Activated T-helper 2 cell treated with anti-CD3 and anti-CD28 coated beads, Interferon-gamma antibody, Interleukin-2, Interleukin-4, amounts not matched to agents 10 μg/mL and 5 μg/mL and 100 μg/mL, durations not matched to agents 14 hours and 24 hours and 36 hours (primary cell): ENCODE measurements at regions of chr4 and their contacts with region 1.

Region 1: DNA sequence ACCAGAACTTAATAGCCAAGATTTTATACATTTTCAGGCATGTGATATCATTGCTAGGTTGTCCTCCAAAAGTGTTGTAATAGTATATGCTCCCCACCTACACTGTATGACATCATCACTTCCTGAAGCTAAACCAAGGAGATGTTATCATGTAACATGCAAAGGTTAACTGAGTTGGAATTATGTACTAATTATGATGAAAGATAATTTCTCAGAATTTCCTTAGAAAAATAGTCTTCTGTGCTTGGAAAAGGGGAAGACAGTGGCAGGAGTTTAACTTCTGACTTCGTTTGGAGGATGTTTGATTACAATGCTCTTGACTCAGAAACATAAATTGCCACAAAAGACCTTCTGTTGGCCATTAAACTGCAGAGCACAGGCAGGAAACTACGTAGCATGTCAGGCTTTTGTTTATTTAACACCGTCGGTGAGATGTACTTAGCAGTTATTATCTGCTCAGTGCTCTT is 83.6 kb upstream of the GUCY1A1 start:
- DNase-seq: peak; percentile 10
- H3K4me3 Mint-ChIP-seq: peak overlapping the region; percentile 4
- H3K27ac Mint-ChIP-seq: peak overlapping the region; percentile 50
- H3K4me1 Mint-ChIP-seq: peaks cover 21% of the 10 kb centered on the region
- H3K27me3 Mint-ChIP-seq: peaks cover 3% of the 10 kb centered on the region

Region 2: DNA sequence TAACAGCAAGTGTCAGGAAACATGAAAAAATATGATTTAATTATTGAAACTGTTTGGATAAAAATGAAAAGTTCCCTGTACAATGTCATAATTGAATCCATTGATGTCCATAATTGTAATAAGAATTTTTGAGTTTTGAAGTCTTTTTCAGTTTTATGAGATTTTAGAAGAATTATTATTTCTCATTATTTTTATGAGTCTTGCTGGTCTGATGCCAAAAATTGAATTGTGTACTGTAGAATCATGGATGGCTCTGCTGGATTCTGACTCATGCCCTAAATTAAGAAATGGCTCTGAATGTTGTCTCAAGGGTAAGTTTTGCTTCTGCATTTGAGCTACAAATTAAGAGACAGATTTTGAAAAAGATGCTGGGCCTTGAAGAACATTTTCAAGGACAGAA is 73.4 kb before region 1 on chr4:
- intact Hi-C with region 1: loop called (anchors 5 kb)
- DNase-seq: no peak
- H3K4me3 Mint-ChIP-seq: no peak overlapping the region
- H3K27ac Mint-ChIP-seq: no peak overlapping the region
- H3K4me1 Mint-ChIP-seq: peaks cover 7% of the 10 kb centered on the region
- H3K27me3 Mint-ChIP-seq: peaks cover 18% of the 10 kb centered on the region

Region 3: GRCh38 chr4:155629183-155629825 is 46.3 kb after region 1 on chr4:
- intact Hi-C with region 1: loop called (anchors 1 kb)
- DNase-seq: no peak
- H3K4me3 Mint-ChIP-seq: no peak overlapping the region
- H3K27ac Mint-ChIP-seq: peak overlapping the region; percentile 58
- H3K4me1 Mint-ChIP-seq: peaks cover 34% of the 10 kb centered on the region
- H3K27me3 Mint-ChIP-seq: peaks cover 1% of the 10 kb centered on the region

Region 4: GRCh38 chr4:155639704-155640523 is 56.9 kb after region 1 on chr4:
- intact Hi-C with region 1: loop called (anchors 1 kb)
- DNase-seq: peak; percentile 18
- H3K4me3 Mint-ChIP-seq: no peak overlapping the region
- H3K27ac Mint-ChIP-seq: peak overlapping the region; percentile 67
- H3K4me1 Mint-ChIP-seq: peaks cover 22% of the 10 kb centered on the region
- H3K27me3 Mint-ChIP-seq: peaks cover 25% of the 10 kb centered on the region

Region 5: GRCh38 chr4:155703486-155704247 is 120.7 kb after region 1 on chr4:
- intact Hi-C with region 1: no loop called
- DNase-seq: no peak
- H3K4me3 Mint-ChIP-seq: no peak overlapping the region
- H3K27ac Mint-ChIP-seq: no peak overlapping the region
- H3K4me1 Mint-ChIP-seq: no peaks in the 10 kb centered on the region
- H3K27me3 Mint-ChIP-seq: peaks cover 4% of the 10 kb centered on the region